ENCODE measurements at regions of chr10 and their contacts with region 1.

Region 1: GRCh38 chr10:42753126-42753506 is 29.5 kb upstream of the BMS1 start:
- DNase-seq: peak; percentile 85

Region 2: GRCh38 chr10:42782446-42783180 is 29.5 kb after region 1 on chr10 and contains the start of gene BMS1:
- intact Hi-C with region 1: loop called (anchors 1 kb)
- DNase-seq: peak; percentile 95
- total RNA-seq, gene BMS1: 13.4 TPM

Region 3: GRCh38 chr10:42816917-42817316 is 63.8 kb after region 1 on chr10:
- intact Hi-C with region 1: no loop called
- DNase-seq: no peak

Region 4: DNA sequence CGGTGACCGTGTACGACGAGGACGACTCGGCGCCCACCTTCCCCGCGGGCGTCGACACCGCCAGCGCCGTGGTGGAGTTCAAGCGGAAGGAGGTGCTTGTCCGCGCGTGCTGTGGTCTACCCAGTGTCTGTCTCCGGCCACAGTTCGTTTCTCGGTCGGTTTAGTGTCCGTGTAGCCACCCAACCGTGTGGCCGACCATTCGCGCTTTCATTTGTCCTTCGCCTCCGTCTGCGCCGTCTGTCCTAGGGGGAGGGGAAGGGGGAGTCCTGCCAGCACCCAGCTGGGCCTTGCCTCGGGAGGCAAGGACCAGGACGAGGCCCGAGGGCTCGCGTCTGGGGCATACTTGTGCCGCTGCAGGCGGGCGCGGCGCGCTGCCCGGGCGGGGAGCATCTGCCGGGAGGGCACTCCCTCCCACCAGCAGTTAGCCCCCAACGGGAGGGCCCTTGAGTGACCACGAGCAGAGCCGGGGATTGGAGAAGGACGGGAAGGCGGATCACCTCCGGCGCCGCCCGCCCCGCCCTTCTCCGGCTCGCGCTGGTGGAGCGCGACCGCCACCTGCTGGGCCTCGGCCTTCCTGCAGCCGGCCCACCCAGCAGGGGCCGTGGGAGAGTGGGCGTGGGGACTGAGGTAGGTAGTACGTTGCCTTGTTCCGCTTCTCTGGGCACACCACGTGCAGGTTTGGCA is 352.1 kb after region 1 on chr10:
- intact Hi-C with region 1: loop called (anchors 5 kb)
- DNase-seq: peak; percentile 93